Adrenal gland (tissue), 19 donors: ENCODE measurements at regions of chr5 and their contacts with region 1.

Region 1: GRCh38 chr5:158174918-158175851 is 316.2 kb upstream of the CLINT1 start:
- DNase-seq: peak; percentile 67 to 87 (median 77)
- H3K4me3 ChIP-seq: no peak overlapping the region
- H3K27ac ChIP-seq: no peak overlapping the region
- H3K4me1 ChIP-seq: no peaks in the 10 kb centered on the region
- H3K27me3 ChIP-seq: no peaks in the 10 kb centered on the region
- CTCF ChIP-seq: peak; percentile 61 to 88 (median 79)
- POLR2A ChIP-seq: no peak

Region 2: GRCh38 chr5:158074992-158075769 is 100.0 kb before region 1 on chr5:
- intact Hi-C with region 1: loop called in 1 of 2 experiments (anchors 10 kb)
- DNase-seq: peak; percentile 38 to 85 (median 64)
- H3K4me3 ChIP-seq: peak overlapping the region in 1 of 4 donors; percentile 26
- H3K27ac ChIP-seq: peak overlapping the region in 2 of 5 donors; percentile 27 to 45
- H3K4me1 ChIP-seq: peaks cover 0 to 5% of the 10 kb centered on the region in 2 donors
- H3K27me3 ChIP-seq: no peaks in the 10 kb centered on the region
- CTCF ChIP-seq: peak; percentile 65 to 85 (median 72)
- POLR2A ChIP-seq: no peak

Region 3: DNA sequence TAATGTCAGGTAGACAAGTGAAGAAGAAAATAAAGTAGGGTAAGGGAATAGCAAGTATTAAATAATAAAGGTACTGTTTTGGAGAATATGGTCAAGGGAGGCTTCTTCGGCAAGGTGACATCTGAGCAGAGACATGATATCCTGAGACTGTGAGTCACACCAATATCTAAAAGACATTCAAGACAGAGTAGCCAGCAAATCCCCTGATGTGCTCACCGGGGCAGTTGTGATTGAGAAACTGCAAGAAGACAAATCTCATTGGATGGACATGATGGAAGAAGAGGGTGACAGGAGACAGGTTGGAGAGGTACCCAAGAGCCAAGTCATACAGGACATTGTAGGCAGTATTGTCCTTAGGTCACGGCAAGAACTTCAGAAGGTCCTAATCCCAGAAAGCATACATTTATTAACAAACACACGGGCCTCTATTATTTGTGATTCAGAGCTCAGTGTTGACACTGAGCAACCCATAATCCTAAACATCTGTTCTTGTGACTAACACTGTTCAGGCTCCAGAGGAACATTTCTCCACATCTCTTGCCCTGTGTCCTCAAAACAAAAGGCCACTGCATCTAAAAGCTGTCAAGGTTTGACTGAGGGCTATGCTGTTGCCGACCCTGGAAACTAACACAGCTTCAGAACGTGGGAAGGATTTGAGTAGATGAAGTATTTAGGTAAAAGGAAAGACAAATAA is 57.6 kb before region 1 on chr5:
- intact Hi-C with region 1: no loop called
- DNase-seq: no peak
- H3K4me3 ChIP-seq: no peak overlapping the region
- H3K27ac ChIP-seq: no peak overlapping the region
- H3K4me1 ChIP-seq: peaks cover 0 to 10% of the 10 kb centered on the region in 2 donors
- H3K27me3 ChIP-seq: no peaks in the 10 kb centered on the region
- CTCF ChIP-seq: no peak
- POLR2A ChIP-seq: no peak

Region 4: DNA sequence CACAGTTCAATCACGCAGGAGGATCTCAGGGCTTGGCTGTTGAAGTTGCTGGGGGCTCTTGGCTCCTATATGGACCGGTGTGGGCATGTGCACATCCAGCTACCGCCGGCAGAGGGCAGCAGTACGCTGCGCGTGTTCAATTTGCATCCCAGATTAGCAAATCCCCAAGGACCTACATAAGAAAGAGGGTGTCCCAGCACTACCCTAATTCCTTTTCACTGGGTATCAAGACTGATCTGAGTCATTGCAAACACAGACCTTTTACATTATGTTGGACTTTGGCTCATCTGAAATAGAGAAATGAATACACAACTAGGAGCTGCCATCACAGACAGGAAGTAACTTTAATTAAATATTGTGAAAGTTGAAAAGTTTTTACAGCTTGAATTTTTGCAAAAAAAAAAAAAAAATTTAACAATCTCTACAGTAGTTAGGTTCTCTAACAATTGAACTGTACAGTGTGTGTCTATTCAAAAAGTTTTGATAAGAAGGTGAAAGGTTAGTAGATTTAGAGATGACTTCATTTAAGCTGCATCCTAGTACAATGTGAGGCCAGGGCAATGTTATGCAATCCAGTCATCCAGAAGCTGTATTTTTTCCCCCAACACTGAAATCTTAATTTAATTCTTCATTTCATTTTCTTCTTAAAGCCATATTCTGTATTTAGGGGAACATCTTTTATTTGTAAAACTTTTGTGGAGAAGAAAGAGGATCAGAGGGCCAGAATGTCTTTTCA is 520.6 kb after region 1 on chr5:
- intact Hi-C with region 1: loop called in 1 of 2 experiments (anchors 10 kb)
- DNase-seq: peak; percentile 44 to 86 (median 69)
- H3K4me3 ChIP-seq: no peak overlapping the region
- H3K27ac ChIP-seq: peak overlapping the region in 1 of 5 donors; percentile 1
- H3K4me1 ChIP-seq: peaks cover 0 to 5% of the 10 kb centered on the region in 2 donors
- H3K27me3 ChIP-seq: no peaks in the 10 kb centered on the region
- CTCF ChIP-seq: peak; percentile 88 to 97 (median 95)
- POLR2A ChIP-seq: no peak

Region 5: DNA sequence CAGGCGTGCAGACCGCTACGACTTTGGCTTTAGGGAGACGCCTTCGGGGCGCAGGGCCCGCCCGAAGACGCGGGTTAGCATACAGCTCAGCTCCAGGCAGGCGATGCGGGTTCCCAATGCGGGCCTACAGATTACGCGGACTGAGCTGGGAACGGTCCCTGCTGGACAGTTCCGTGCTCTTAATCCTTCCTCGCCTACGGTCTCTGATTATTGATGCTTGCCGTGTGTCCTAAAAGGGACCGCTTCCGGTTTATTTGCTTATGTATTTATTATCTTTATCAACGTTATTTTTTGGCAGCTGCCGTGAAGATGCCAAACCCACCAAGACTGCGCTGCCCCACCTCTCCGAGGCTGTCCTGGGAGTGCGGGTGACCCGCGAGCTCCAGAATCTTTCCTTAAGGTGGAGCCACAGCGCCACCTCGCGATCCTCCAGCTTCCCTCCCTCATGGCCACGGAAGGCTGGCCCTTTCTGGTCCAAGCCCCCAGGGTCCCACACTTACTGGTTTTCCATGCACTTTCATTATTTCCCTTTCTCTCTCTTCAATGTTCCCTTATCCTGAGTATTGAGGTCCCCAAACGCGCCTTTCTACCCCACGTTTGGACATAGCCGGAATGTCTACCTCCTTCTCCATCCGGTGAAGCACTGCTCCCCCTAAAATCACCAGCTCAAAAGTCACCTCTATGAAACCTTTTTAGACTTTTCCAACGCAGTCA is 931.5 kb after region 1 on chr5:
- intact Hi-C with region 1: loop called (anchors 5 to 10 kb)
- DNase-seq: peak; percentile 61 to 87 (median 72)
- H3K4me3 ChIP-seq: peak overlapping the region in 1 of 4 donors; percentile 20
- H3K27ac ChIP-seq: no peak overlapping the region
- H3K4me1 ChIP-seq: no peaks in the 10 kb centered on the region
- H3K27me3 ChIP-seq: peaks cover 20% of the 10 kb centered on the region
- CTCF ChIP-seq: peak; percentile 75 to 96 (median 92)
- POLR2A ChIP-seq: no peak

Region 6: GRCh38 chr5:159581502-159582249 is 1406.5 kb after region 1 on chr5:
- intact Hi-C with region 1: no loop called
- DNase-seq: peak; percentile 71 to 84 (median 81)
- H3K4me3 ChIP-seq: no peak overlapping the region
- H3K27ac ChIP-seq: no peak overlapping the region
- H3K4me1 ChIP-seq: no peaks in the 10 kb centered on the region
- H3K27me3 ChIP-seq: no peaks in the 10 kb centered on the region
- CTCF ChIP-seq: no peak
- POLR2A ChIP-seq: no peak